Activated B cell treated with CpG ODN at 0.5 μM for 24 hours (primary cell): ENCODE measurements at regions of chr19 and their contacts with region 1.

Region 1: GRCh38 chr19:17125715-17126677 is 50.4 kb downstream of the MYO9B start:
- DNase-seq: peak; percentile 51
- ATAC-seq: peak; percentile 77
- H3K4me3 Mint-ChIP-seq: peak overlapping the region; percentile 84
- H3K27ac Mint-ChIP-seq: peak overlapping the region; percentile 98
- H3K4me1 Mint-ChIP-seq: peaks cover 66% of the 10 kb centered on the region
- H3K27me3 Mint-ChIP-seq: no peaks in the 10 kb centered on the region
- CTCF ChIP-seq: no peak

Region 2: GRCh38 chr19:17107525-17108452 is 18.2 kb before region 1 on chr19:
- CTCF ChIA-PET with region 1: interaction called, 3 read pairs
- POLR2A ChIA-PET with region 1: interaction called, 53 read pairs
- intact Hi-C with region 1: loop called (anchors 1 kb)
- DNase-seq: no peak
- ATAC-seq: peak; percentile 23
- H3K4me3 Mint-ChIP-seq: peak overlapping the region; percentile 53
- H3K27ac Mint-ChIP-seq: peak overlapping the region; percentile 86
- H3K4me1 Mint-ChIP-seq: peaks cover 93% of the 10 kb centered on the region
- H3K27me3 Mint-ChIP-seq: no peaks in the 10 kb centered on the region
- CTCF ChIP-seq: no peak

Region 3: GRCh38 chr19:17183858-17184321 is 57.9 kb after region 1 on chr19:
- CTCF ChIA-PET with region 1: no interaction called
- POLR2A ChIA-PET with region 1: interaction called, 12 read pairs
- intact Hi-C with region 1: no loop called
- DNase-seq: peak; percentile 42
- ATAC-seq: peak; percentile 85
- H3K4me3 Mint-ChIP-seq: peak overlapping the region; percentile 79
- H3K27ac Mint-ChIP-seq: peak overlapping the region; percentile 99
- H3K4me1 Mint-ChIP-seq: peaks cover 32% of the 10 kb centered on the region
- H3K27me3 Mint-ChIP-seq: no peaks in the 10 kb centered on the region
- CTCF ChIP-seq: no peak

Region 4: GRCh38 chr19:17245244-17245984 is 119.4 kb after region 1 on chr19 and contains the start of gene NR2F6:
- CTCF ChIA-PET with region 1: no interaction called
- POLR2A ChIA-PET with region 1: interaction called, 15 read pairs
- intact Hi-C with region 1: no loop called
- DNase-seq: no peak
- ATAC-seq: peak; percentile 39
- H3K4me3 Mint-ChIP-seq: peak within 1 kb of the TSS; percentile 92
- H3K27ac Mint-ChIP-seq: peak within 1 kb of the TSS; percentile 89
- H3K4me1 Mint-ChIP-seq: peaks cover 13% of the 10 kb centered on the region
- H3K27me3 Mint-ChIP-seq: no peaks in the 10 kb centered on the region
- CTCF ChIP-seq: no peak
- total RNA-seq, gene NR2F6: 4.3 and 4.6 TPM in 2 replicates

Region 5: GRCh38 chr19:17419621-17420466 is 293.8 kb after region 1 on chr19 and contains the start of gene MVB12A:
- CTCF ChIA-PET with region 1: no interaction called
- POLR2A ChIA-PET with region 1: no interaction called
- intact Hi-C with region 1: no loop called
- DNase-seq: peak; percentile 91
- ATAC-seq: peak; percentile 97
- H3K4me3 Mint-ChIP-seq: peak within 1 kb of the TSS; percentile 95
- H3K27ac Mint-ChIP-seq: peak within 1 kb of the TSS; percentile 93
- H3K4me1 Mint-ChIP-seq: peaks cover 16% of the 10 kb centered on the region
- H3K27me3 Mint-ChIP-seq: no peaks in the 10 kb centered on the region
- CTCF ChIP-seq: no peak
- total RNA-seq, gene MVB12A: 22.8 and 23.3 TPM in 2 replicates

Region 6: DNA sequence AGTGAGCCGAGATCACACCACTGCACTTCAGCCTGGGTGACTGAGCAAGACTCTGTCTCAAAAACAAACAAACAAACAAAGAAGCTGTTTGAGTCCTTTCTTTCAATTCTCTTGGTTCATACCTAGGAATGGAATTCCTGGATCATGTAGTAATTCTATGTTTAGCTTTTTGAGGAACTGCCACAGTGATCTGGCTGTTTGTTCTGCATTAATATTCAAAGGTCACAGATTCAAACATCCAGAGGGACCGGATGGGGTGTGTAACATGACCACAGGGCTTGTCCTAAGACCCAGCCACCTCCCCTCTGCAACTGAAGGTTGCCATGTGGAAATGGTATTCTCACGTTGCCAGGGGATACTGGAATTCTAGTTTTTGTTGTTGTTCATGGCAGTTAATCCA is 439.6 kb after region 1 on chr19:
- CTCF ChIA-PET with region 1: no interaction called
- POLR2A ChIA-PET with region 1: no interaction called
- intact Hi-C with region 1: no loop called
- DNase-seq: no peak
- ATAC-seq: no peak
- H3K4me3 Mint-ChIP-seq: no peak overlapping the region
- H3K27ac Mint-ChIP-seq: no peak overlapping the region
- H3K4me1 Mint-ChIP-seq: no peaks in the 10 kb centered on the region
- H3K27me3 Mint-ChIP-seq: no peaks in the 10 kb centered on the region
- CTCF ChIP-seq: no peak